Activated naive CD8-positive, alpha-beta T cell treated with anti-CD3 and anti-CD28 coated beads, Interleukin-2, amount 10 ng/mL, durations not matched to agents 7 days and 5 days (primary cell): ENCODE measurements at regions of chr22 and their contacts with region 1.

Region 1: GRCh38 chr22:20238536-20238900 is 29.6 kb downstream of the RTN4R start:
- DNase-seq: peak; percentile 77
- ATAC-seq: peak; percentile 79
- H3K4me3 Mint-ChIP-seq: peak overlapping the region; percentile 39
- H3K27ac Mint-ChIP-seq: peak overlapping the region; percentile 89
- H3K4me1 Mint-ChIP-seq: peaks cover 13% of the 10 kb centered on the region
- H3K27me3 Mint-ChIP-seq: no peaks in the 10 kb centered on the region

Region 2: DNA sequence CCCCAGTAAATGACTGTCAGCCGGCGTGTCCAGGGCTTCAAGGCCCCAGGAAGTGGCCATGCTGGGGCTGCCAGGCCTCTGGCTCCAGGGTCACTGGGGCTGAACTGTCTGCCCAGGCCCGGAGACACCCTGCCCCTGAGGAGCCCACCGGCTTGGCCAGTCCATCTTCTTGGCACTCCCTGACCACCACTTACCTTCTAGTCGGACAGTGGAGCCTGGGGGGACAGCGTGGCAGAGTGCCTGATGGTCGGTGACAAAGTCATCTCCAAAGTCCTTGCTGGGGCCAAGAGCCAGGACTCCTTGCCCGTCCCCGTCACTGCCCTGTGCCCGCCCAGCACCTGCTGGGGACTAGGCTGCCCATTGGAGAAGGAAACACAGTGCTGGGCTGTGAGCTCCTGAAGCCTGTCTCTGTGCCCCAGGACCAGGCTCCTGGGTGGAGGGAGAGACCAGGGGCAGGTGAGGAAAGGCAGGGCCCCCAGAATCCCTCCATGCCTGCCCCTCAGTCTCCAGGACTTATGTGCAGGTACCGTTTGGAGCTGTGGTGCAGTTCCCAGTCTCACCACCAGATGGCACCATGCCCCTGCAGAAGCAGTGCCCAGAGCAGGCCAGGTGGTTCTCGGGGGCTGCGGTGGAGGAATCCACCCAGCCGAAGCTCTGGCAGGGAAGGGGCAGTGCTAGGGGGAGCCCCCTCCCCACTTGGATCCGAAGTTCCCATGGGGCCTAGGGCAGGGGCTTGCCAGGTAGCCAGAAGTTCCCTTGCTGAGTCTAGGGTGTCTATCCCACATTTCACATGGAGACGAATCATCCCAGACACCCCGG is 81.7 kb before region 1 on chr22:
- POLR2A ChIA-PET with region 1: interaction called, 10 read pairs
- DNase-seq: peak; percentile 93
- ATAC-seq: peak; percentile 83
- H3K4me3 Mint-ChIP-seq: no peak overlapping the region
- H3K27ac Mint-ChIP-seq: peak overlapping the region; percentile 31
- H3K4me1 Mint-ChIP-seq: no peaks in the 10 kb centered on the region
- H3K27me3 Mint-ChIP-seq: peaks cover 2% of the 10 kb centered on the region

Region 3: GRCh38 chr22:20205964-20206708 is 32.4 kb before region 1 on chr22:
- POLR2A ChIA-PET with region 1: interaction called, 10 read pairs
- DNase-seq: peak; percentile 74
- ATAC-seq: peak; percentile 87
- H3K4me3 Mint-ChIP-seq: peak overlapping the region; percentile 96
- H3K27ac Mint-ChIP-seq: peak overlapping the region; percentile 96
- H3K4me1 Mint-ChIP-seq: peaks cover 13% of the 10 kb centered on the region
- H3K27me3 Mint-ChIP-seq: no peaks in the 10 kb centered on the region

Region 4: DNA sequence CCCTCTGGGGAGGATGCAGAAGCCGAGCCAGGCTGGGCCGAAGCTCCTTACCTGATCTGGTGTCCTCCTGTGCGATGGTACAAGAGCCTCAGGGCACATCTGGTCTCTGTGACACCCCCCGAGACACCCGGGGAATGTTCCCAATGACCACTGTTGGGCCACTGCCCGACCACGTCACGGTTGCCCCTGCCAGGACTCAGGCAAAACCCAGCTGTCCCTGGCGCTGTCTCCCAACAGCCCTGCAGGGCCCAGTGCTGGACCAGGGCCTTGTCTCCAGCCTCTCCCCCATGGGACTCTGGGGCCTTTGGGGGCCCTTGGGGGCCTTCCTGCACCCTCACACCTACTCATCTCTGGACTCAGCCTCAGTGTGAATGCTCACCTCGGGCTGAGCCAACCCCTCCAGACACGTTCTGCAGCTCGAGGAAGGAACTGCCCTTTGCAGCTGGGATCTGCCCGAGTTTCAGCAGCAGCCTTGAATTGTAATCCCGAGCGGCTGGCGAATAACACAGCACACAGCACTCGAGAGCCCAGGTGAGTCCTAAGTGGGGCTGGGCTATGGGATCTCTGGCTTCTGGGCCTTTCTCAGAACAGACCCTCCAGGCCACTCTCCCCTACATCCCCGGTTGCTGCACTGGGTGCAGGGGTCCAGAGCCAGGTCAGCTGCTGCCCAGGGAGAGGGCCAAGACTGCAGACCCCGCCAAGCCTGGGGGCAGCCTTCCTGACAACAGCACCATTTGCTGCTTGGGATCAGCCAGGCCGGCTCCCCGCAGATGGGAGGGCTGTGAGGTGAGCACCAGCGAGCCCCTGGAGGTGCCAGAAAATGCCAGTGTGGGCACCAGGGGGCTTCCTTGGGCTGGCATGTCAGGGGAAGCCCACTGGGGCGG is 10.2 kb before region 1 on chr22:
- POLR2A ChIA-PET with region 1: no interaction called
- DNase-seq: no peak
- ATAC-seq: no peak
- H3K4me3 Mint-ChIP-seq: no peak overlapping the region
- H3K27ac Mint-ChIP-seq: no peak overlapping the region
- H3K4me1 Mint-ChIP-seq: no peaks in the 10 kb centered on the region
- H3K27me3 Mint-ChIP-seq: no peaks in the 10 kb centered on the region